ENCODE measurements at regions of chr20 and their contacts with region 1.

Region 1: DNA sequence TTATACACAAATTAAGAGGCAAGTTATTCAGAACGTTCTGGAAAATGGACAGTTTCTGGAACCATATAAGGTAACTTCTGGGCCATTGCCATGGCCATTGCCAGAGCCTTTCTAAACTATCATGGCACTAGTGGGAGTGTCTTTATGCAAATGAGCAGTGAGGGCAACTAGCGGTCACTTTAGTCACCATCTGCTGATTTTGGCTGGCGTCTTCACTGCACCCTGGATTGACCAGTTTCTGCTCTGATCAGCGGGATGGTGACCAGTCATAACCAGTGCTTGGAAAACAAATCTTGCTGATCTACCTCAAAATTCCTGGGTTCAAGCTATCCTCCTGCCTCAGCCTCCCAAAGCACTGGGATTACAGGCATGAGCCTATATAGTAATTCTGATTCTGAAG is 7.3 kb upstream of the SNTA1 start:
- DNase-seq: no peak
- CTCF ChIP-seq: no peak

Region 2: DNA sequence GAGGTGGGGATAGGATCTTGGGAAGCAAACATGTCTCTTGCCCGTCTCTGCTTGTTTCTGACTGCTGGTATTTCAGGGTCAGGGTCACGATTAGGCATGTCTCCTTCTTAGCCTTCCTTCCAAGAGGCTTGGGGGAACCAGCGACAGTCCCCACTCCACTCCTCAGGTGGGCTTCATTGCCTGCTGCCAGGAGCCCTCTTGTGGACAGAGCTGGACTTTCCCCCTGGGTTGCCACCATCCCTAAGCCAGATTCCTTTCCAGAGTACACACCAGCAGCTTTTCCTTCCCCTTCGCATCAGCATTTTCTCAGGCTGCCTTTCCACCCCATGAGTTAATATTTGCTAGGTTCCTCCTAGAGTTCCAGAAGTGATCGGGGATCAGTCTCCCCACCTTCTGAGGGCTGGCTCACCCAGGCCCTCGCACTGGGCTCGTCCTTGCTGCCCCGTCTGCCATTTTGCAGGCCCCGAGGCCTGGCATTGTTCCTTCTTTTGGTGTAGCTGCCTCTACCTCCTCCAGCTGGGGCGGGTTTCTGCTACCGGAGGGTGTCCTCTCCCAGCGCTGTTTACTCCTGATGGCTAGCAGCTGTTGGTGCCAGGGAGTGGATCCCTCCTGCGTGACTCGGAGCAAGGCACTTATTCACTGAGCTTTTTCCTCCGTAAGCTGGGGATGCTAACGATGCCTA is 202.5 kb after region 1 on chr20:
- in situ Hi-C with region 1: loop called (anchors 10 kb)
- DNase-seq: peak; percentile 77
- CTCF ChIP-seq: peak; percentile 78

Measured in GM13977 (cell line).